Endothelial cell of umbilical vein (primary cell): ENCODE measurements at regions of chr10 and their contacts with region 1.

Region 1: GRCh38 chr10:79084012-79084971 is 15.5 kb downstream of the ZMIZ1 start:
- DNase-seq: peak; percentile 95
- H3K4me3 ChIP-seq: no peak overlapping the region
- H3K27ac ChIP-seq: peak overlapping the region; percentile 64
- H3K4me1 ChIP-seq: peaks cover 27% of the 10 kb centered on the region
- H3K27me3 ChIP-seq: no peaks in the 10 kb centered on the region
- CTCF ChIP-seq: no peak
- POLR2A ChIP-seq: peak; percentile 20

Region 2: DNA sequence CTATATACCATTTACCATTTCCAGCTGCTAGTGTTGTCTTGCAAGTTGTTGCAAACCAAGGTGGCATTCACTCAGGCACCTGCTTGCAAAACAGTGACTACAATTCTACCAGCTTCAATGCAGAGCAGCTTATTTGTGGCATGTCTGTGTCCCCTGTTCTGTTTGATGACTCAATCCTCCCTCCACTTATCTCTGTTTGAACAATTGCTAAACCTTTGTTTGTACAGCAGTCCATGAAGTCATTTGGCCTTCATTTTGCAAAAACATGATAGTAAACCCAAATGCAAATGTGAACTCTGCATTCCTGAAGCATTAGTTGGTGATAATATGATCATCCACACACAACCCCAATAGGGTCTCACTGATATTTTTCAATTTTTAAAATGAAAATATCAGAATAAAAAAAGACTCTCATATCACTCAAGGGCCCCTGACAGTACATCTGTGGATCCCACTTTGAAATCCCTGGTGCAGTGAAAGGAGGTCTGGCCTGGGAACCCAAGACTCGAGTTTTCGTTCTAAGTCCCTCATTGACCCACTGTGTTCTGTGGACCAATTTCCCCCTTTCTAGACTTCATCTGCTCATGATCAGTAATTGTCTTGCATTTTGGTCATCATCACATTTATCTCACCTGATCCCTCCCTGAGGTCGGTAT is 625.2 kb before region 1 on chr10:
- CTCF ChIA-PET with region 1: no interaction called
- POLR2A ChIA-PET with region 1: no interaction called
- dilution Hi-C with region 1: no loop called
- intact Hi-C with region 1: loop called (anchors 5 kb)
- DNase-seq: peak; percentile 98
- H3K4me3 ChIP-seq: no peak overlapping the region
- H3K27ac ChIP-seq: peak overlapping the region; percentile 99
- H3K4me1 ChIP-seq: peaks cover 43% of the 10 kb centered on the region
- H3K27me3 ChIP-seq: no peaks in the 10 kb centered on the region
- CTCF ChIP-seq: no peak
- POLR2A ChIP-seq: peak; percentile 87

Region 3: DNA sequence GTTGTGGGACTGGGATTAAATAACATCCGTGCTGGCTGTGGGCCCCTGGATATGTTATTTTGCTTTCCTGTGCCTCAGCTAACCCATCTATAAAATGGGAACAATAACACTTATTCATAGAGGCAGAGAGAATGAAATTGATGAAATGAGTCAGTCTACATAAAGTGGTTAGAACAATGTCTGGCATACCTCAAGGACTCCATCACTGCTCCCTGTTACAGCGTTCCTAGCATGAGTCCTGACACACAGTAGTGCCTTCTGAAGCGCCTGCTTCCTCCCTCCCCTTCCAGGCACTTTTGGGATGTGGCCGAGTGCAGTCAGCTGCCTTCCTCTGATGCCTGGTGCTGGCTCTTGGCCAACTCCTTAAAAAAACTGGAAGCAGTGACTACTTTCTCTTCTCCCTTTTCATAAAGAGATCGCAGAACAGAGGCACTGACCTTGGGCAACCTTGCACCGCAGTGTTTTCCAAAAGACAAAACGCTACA is 123.9 kb before region 1 on chr10:
- CTCF ChIA-PET with region 1: no interaction called
- POLR2A ChIA-PET with region 1: interaction called, 14 read pairs
- dilution Hi-C with region 1: no loop called
- intact Hi-C with region 1: no loop called
- DNase-seq: peak; percentile 73
- H3K4me3 ChIP-seq: no peak overlapping the region
- H3K27ac ChIP-seq: no peak overlapping the region
- H3K4me1 ChIP-seq: peaks cover 23% of the 10 kb centered on the region
- H3K27me3 ChIP-seq: no peaks in the 10 kb centered on the region
- CTCF ChIP-seq: no peak
- POLR2A ChIP-seq: no peak

Region 4: DNA sequence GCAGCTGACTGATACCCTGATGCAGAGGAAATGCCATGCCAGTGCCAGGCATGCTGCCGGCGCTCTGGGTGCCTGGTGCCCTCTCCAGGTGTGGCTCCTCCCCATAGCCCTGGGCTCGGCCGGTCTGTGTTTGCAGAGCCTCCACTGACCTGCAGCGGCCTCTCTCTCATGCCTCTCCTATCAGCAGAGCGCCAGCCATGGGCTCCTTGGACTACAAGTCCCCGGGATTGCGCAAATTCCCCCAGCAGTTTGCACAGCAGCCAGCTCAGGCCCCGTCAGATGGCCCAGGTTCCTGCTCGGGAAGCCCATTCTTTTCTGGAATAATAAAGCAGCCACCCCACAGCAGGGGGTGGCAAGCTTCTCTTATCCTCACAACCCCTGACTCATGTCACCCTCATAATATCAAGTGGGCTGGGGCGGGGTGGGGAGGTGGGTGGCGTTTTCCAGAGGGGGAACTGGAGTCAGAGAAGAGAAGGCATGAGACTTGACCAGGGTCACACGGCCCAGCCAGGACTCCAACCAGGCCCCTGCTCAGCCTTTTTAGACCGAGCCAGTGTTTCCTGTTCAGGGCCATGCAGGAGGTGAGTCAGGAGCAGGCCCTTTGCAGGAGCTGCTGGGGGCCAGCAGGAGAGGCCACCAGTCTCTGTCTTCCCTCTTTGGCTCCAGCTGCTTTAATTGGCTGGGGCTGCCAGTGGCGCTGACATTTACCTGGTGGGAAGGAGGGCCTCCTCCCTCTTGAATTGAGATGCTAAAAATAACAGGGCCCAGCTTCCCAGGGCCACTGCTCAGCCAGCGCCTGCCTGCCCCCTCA is 43.1 kb after region 1 on chr10:
- CTCF ChIA-PET with region 1: interaction called, 3 read pairs
- POLR2A ChIA-PET with region 1: no interaction called
- dilution Hi-C with region 1: no loop called
- intact Hi-C with region 1: loop called (anchors 1 kb)
- DNase-seq: peak; percentile 67
- H3K4me3 ChIP-seq: no peak overlapping the region
- H3K27ac ChIP-seq: peak overlapping the region; percentile 21
- H3K4me1 ChIP-seq: peaks cover 49% of the 10 kb centered on the region
- H3K27me3 ChIP-seq: no peaks in the 10 kb centered on the region
- CTCF ChIP-seq: no peak
- POLR2A ChIP-seq: no peak

Region 5: DNA sequence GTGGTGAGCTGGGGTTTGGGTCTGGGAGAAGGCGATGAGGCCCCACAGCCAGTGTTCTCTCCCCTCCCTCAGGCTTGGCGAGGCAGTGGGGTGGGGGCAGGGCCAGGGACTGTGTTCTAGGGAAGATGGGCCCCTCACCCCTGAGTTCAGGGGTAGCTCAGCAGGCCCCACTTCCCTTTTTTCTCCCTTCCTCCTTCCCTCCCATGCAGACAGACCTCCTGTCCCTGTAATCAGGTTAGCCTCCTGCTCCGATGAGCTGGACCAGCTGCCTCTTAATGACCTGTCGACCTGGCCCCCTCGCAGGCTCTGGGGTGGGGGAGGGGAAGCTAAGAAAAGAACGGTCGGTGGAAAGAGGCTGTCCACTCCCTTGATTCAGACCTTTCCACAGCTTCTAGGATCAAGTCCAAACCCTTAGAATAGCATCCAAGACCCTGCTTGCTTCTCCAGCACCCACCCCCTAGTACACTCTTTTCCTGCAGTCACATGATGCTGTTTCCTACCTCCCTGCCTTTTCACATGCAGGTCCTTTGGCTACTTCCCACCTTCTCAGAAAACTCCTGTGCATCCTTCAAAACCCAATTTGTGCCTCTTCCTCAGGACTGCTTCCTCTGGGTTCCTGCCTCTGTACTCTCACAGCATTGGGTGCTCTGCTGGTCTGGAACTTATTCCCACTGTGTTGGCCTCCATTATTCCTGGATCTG is 48.5 kb after region 1 on chr10:
- CTCF ChIA-PET with region 1: no interaction called
- POLR2A ChIA-PET with region 1: no interaction called
- dilution Hi-C with region 1: no loop called
- intact Hi-C with region 1: loop called (anchors 1 kb)
- DNase-seq: no peak
- H3K4me3 ChIP-seq: no peak overlapping the region
- H3K27ac ChIP-seq: no peak overlapping the region
- H3K4me1 ChIP-seq: peaks cover 53% of the 10 kb centered on the region
- H3K27me3 ChIP-seq: no peaks in the 10 kb centered on the region
- CTCF ChIP-seq: no peak
- POLR2A ChIP-seq: no peak

Region 6: GRCh38 chr10:79155301-79156081 is 71.2 kb after region 1 on chr10:
- CTCF ChIA-PET with region 1: interaction called, 3 read pairs
- POLR2A ChIA-PET with region 1: no interaction called
- dilution Hi-C with region 1: no loop called
- intact Hi-C with region 1: loop called (anchors 1 kb)
- DNase-seq: peak; percentile 66
- H3K4me3 ChIP-seq: no peak overlapping the region
- H3K27ac ChIP-seq: peak overlapping the region; percentile 77
- H3K4me1 ChIP-seq: peaks cover 76% of the 10 kb centered on the region
- H3K27me3 ChIP-seq: no peaks in the 10 kb centered on the region
- CTCF ChIP-seq: peak in 1 of 2 donors; percentile 34
- POLR2A ChIP-seq: no peak

Region 7: GRCh38 chr10:80078448-80079311 is 994.4 kb after region 1 on chr10 and contains the start of gene TMEM254:
- CTCF ChIA-PET with region 1: no interaction called
- POLR2A ChIA-PET with region 1: no interaction called
- dilution Hi-C with region 1: no loop called
- intact Hi-C with region 1: no loop called
- DNase-seq: peak; percentile 88
- H3K4me3 ChIP-seq: peak within 1 kb of the TSS; percentile 46 to 94 (median 79)
- H3K27ac ChIP-seq: peak within 1 kb of the TSS; percentile 48
- H3K4me1 ChIP-seq: peaks cover 8% of the 10 kb centered on the region
- H3K27me3 ChIP-seq: no peaks in the 10 kb centered on the region
- CTCF ChIP-seq: no peak
- POLR2A ChIP-seq: no peak
- total RNA-seq, gene TMEM254: 6.0 and 10.1 TPM in 2 replicates